Panc1 (cell line): ENCODE measurements at regions of chr17 and their contacts with region 1.

Region 1: DNA sequence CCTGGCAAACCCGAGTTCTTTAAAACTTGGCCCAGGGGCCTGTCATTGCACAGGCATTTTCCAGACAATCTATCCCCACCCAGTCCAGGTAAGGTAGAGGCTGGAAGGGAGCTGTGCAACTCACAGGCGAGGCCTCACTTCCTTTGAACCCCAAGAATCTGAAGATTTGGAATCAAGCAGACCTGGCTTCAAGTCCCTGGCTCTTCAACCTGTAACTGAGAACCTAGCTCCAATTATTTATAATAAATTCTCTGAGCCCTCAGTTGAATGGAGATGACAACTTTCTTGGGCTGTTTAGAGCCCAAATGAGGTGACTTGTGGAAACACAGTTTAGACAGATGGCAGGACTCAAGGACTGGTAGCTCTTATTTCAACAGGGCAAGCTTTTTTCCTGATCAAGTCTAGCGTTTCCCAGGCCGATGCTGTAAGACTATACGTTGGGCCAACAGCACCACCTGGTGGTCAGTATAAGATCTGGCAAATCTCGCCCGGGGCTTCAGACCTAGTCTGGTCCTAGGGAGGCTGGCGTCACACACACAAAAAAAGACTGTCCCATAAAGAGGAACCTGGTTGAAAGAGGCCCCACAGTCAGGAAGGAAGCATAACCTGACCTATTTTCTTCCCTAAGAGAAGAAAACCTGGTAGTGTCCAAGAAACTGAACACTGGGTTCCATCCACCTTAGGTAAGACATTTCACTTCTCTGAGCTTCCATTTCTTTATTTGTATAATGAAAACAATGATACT is 117.9 kb downstream of the C17orf67 start:
- DNase-seq: peak; percentile 61
- ATAC-seq: peak; percentile 99
- H3K4me3 ChIP-seq: no peak overlapping the region
- H3K27ac ChIP-seq: no peak overlapping the region
- H3K4me1 ChIP-seq: no peaks in the 10 kb centered on the region; the same call in 1 of the 2 replicates
- H3K27me3 ChIP-seq: no peaks in the 10 kb centered on the region
- CTCF ChIP-seq: peak; percentile 87

Region 2: DNA sequence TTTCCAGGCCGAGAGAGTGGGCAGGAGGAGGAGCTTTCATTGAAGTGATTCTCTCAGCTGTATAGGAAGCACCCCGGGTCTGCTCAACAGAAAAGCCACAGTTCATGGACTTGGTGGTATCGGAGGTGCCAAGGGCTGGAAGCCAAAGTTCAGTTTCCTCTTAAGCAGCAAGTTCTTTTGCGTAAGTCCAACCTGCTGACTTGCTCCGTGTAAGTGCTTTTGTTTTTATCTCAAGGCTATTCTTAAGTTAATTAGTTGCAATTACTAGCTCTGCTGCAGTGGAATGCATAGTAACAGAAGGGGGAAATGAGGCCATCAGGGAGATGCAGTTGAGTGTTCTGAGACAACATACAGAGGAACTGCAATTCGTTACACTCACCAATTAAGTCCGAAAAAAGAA is 1249.1 kb before region 1 on chr17:
- CTCF ChIA-PET with region 1: no interaction called
- POLR2A ChIA-PET with region 1: no interaction called
- in situ Hi-C with region 1: no loop called
- intact Hi-C with region 1: no loop called
- DNase-seq: no peak
- ATAC-seq: no peak
- H3K4me3 ChIP-seq: no peak overlapping the region
- H3K27ac ChIP-seq: no peak overlapping the region
- H3K4me1 ChIP-seq: no peaks in the 10 kb centered on the region
- H3K27me3 ChIP-seq: no peaks in the 10 kb centered on the region
- CTCF ChIP-seq: no peak

Region 3: GRCh38 chr17:56447171-56447570 is 268.6 kb before region 1 on chr17:
- CTCF ChIA-PET with region 1: no interaction called
- POLR2A ChIA-PET with region 1: no interaction called
- in situ Hi-C with region 1: no loop called
- intact Hi-C with region 1: loop called (anchors 5 kb)
- DNase-seq: no peak
- ATAC-seq: no peak
- H3K4me3 ChIP-seq: no peak overlapping the region
- H3K27ac ChIP-seq: no peak overlapping the region
- H3K4me1 ChIP-seq: no peaks in the 10 kb centered on the region
- H3K27me3 ChIP-seq: peaks cover 4% of the 10 kb centered on the region
- CTCF ChIP-seq: no peak

Region 4: DNA sequence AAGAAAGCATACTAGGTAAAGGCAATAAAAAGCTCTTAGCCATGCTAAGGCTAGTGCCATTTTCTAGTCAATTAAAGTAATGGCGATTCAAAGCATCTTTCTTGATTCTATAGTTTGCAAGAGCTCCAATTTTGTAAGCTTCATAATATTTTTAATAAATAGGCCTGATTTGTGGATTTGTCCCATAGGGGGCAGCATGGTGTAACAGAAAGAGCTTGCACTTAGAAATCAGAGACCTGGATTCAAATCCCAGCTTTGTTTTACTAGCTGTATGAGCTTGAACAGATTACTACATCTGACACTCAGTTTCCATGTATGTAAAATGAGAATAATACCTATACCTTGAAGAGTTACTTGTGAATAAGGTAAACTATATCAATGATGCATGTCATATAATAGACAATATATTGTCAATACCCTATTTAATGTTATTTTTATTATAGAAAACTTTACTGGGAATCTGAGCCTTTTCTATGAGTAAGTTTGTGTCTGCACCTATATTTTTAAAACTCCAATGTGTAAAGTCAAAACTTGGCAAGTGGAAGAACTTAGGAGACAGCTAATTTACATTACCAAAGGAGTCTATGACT is 215.9 kb before region 1 on chr17:
- CTCF ChIA-PET with region 1: interaction called, 15 read pairs
- POLR2A ChIA-PET with region 1: no interaction called
- in situ Hi-C with region 1: no loop called
- intact Hi-C with region 1: loop called (anchors 5 kb)
- DNase-seq: peak; percentile 12
- ATAC-seq: no peak
- H3K4me3 ChIP-seq: no peak overlapping the region
- H3K27ac ChIP-seq: no peak overlapping the region
- H3K4me1 ChIP-seq: no peaks in the 10 kb centered on the region
- H3K27me3 ChIP-seq: 0 out of 2 replicates have a peak, but pooled peaks cover 2% of the 10 kb centered on the region
- CTCF ChIP-seq: peak; percentile 57; the same call in 1 of the 2 replicates

Region 5: GRCh38 chr17:56592487-56593085 is 123.2 kb before region 1 on chr17:
- CTCF ChIA-PET with region 1: interaction called, 34 read pairs
- POLR2A ChIA-PET with region 1: no interaction called
- in situ Hi-C with region 1: no loop called
- intact Hi-C with region 1: loop called (anchors 1 kb)
- DNase-seq: no peak
- ATAC-seq: peak; percentile 70
- H3K4me3 ChIP-seq: peak overlapping the region; percentile 61 to 87
- H3K27ac ChIP-seq: no peak overlapping the region
- H3K4me1 ChIP-seq: peaks cover 13% of the 10 kb centered on the region
- H3K27me3 ChIP-seq: peaks cover 5% of the 10 kb centered on the region
- CTCF ChIP-seq: peak; percentile 99

Region 6: GRCh38 chr17:56638591-56639051 is 77.2 kb before region 1 on chr17:
- CTCF ChIA-PET with region 1: no interaction called
- POLR2A ChIA-PET with region 1: no interaction called
- in situ Hi-C with region 1: no loop called
- intact Hi-C with region 1: no loop called
- DNase-seq: no peak
- ATAC-seq: no peak
- H3K4me3 ChIP-seq: no peak overlapping the region
- H3K27ac ChIP-seq: no peak overlapping the region
- H3K4me1 ChIP-seq: no peaks in the 10 kb centered on the region
- H3K27me3 ChIP-seq: no peaks in the 10 kb centered on the region
- CTCF ChIP-seq: no peak

Region 7: GRCh38 chr17:56779898-56780733 is 64.3 kb after region 1 on chr17:
- CTCF ChIA-PET with region 1: interaction called, 10 read pairs
- POLR2A ChIA-PET with region 1: no interaction called
- in situ Hi-C with region 1: no loop called
- intact Hi-C with region 1: loop called (anchors 5 kb)
- DNase-seq: no peak
- ATAC-seq: peak; percentile 98
- H3K4me3 ChIP-seq: peak overlapping the region; percentile 24 to 40
- H3K27ac ChIP-seq: no peak overlapping the region
- H3K4me1 ChIP-seq: peaks cover 11% of the 10 kb centered on the region
- H3K27me3 ChIP-seq: no peaks in the 10 kb centered on the region
- CTCF ChIP-seq: peak; percentile 100